Cardiac septum (tissue), 1 donor: ENCODE measurements at regions of chr10 and their contacts with region 1.

Region 1: GRCh38 chr10:114694752-114695151 is 36.7 kb upstream of the ABLIM1 start:
- DNase-seq: no peak

Region 2: GRCh38 chr10:114477285-114477684 is 217.5 kb before region 1 on chr10:
- intact Hi-C with region 1: loop called (anchors 5 kb)
- DNase-seq: no peak

Region 3: GRCh38 chr10:114520453-114520852 is 174.3 kb before region 1 on chr10:
- intact Hi-C with region 1: no loop called
- DNase-seq: no peak

Region 4: DNA sequence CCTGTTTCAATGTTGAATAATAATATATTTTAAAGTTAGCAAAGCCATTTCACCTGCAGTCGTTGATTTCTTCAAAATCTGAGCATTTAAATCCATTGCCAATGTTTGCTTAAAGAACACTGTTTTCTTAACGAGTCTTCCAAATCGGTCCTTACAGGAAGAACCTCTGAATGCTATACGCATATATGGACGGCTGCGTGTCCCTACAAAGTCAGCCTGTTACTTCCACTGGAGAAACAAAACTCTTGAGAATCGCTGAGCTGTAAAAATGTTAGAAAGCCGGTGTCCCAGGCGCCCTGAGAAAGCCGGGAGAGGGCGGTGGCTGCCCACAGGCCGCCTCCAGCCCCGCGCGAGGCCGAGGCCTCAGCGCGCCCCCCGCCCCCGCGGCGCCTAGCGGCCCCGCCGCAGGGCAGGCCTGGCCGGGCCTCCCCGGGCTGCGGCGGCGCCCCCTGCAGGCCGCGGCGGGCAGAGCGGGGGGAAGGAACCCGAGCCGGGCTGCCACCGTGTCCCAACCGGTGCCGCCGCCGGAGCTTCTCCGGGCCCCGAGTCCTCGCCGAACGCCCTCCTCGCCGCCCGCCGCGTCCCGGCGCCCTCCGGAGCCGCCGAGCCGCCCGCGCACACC is 126.7 kb after region 1 on chr10 and contains the start of gene FHIP2A:
- intact Hi-C with region 1: no loop called
- DNase-seq: peak; percentile 93
- total RNA-seq, gene FHIP2A: 26.5 TPM